ENCODE measurements at regions of chr7 and their contacts with region 1.

Region 1: DNA sequence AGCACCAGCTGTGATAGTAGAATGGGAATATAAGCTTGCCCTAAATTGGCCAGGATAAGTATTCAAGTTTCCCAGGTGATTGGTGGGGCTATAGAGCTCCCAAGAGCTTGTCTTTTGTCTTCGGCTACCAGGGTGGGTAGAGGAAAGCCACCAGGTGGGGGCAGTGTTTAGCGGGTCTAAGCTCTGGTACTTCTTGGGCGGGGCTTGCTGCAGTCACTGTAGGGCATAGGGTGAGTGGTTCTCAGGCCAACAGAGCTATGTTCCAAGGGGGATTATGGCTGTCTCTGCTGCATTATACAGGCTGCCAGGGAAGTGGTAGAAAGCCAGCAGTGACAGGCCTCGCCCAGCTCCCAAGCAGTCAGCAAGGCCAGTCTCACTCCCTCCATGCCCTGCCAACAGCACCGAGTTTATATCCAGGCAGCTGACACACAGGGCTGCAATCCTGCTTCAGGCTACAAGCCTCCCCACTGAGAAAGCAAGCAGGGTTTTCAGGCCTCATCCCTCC is 110.7 kb downstream of the ZNF467 start:
- ATAC-seq: peak; percentile 45 to 100 (median 84)
- H3K4me3 ChIP-seq: no peak overlapping the region
- H3K27ac ChIP-seq: no peak overlapping the region
- H3K4me1 ChIP-seq: no peaks in the 10 kb centered on the region

Region 2: GRCh38 chr7:149771721-149772240 is 109.1 kb after region 1 on chr7:
- in situ Hi-C with region 1: loop called in 1 of 9 experiments (anchors 25 kb)
- ATAC-seq: peak; percentile 77 to 93 (median 82)
- H3K4me3 ChIP-seq: peak overlapping the region; percentile 29 to 54 (median 40)
- H3K27ac ChIP-seq: peak overlapping the region; percentile 18 to 74
- H3K4me1 ChIP-seq: peaks cover 27 to 35% of the 10 kb centered on the region in 2 donors

Measured in motor neuron (in vitro differentiated cells).